H1 (cell line): ENCODE measurements at regions of chr2 and their contacts with region 1.

Region 1: GRCh38 chr2:165874445-165875039 is 79.0 kb downstream of the TTC21B start:
- DNase-seq: no peak
- H3K4me3 ChIP-seq: no peak overlapping the region
- H3K27ac ChIP-seq: no peak overlapping the region
- H3K4me1 ChIP-seq: no peaks in the 10 kb centered on the region
- H3K27me3 ChIP-seq: peaks cover 0 to 1% (median 0%) of the 10 kb centered on the region in 4 experiments; a peak in 1 of 7 replicates
- CTCF ChIP-seq: peak in 2 of 3 experiments; percentile 53 to 69; a peak in 2 of 4 replicates
- EP300 ChIP-seq: no peak
- POLR2A ChIP-seq: no peak
- RAD21 ChIP-seq: peak; percentile 93 to 94

Region 2: GRCh38 chr2:165401285-165401852 is 473.2 kb before region 1 on chr2:
- CTCF ChIA-PET with region 1: interaction called, 13 read pairs
- POLR2A ChIA-PET with region 1: no interaction called
- DNase-seq: no peak
- H3K4me3 ChIP-seq: no peak overlapping the region
- H3K27ac ChIP-seq: no peak overlapping the region
- H3K4me1 ChIP-seq: peaks cover 0 to 5% (median 4%) of the 10 kb centered on the region in 4 experiments; a peak in 5 of 7 replicates
- H3K27me3 ChIP-seq: no peaks in the 10 kb centered on the region
- CTCF ChIP-seq: peak in 2 of 3 experiments; percentile 60 to 71; a peak in 2 of 4 replicates
- EP300 ChIP-seq: no peak
- POLR2A ChIP-seq: no peak
- RAD21 ChIP-seq: peak; percentile 84 to 88

Region 3: DNA sequence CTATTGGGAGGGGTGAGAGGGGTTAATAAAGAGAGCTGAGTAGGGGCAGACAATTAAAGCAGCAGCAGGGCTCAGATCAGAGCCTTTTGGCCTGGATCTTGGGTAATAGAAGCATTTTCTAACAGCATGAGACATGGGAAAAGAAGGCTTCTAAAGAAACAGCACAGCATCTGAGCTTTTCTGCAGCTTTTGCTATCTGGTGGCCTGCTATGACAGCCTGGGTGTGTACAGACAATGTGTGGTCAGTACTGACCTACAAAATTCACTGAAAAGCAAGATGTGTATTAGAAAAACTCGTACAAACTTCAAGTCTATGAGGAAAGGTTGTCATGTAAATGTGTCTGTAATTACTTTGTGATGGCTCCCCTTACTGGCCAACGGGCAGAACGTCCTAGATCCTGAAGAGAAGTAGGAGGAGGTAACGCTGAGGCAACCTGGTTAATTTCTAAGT is 176.1 kb before region 1 on chr2:
- CTCF ChIA-PET with region 1: interaction called, 10 read pairs
- POLR2A ChIA-PET with region 1: no interaction called
- DNase-seq: peak in 1 of 2 experiments; percentile 69
- H3K4me3 ChIP-seq: no peak overlapping the region; a peak in 1 of 8 replicates
- H3K27ac ChIP-seq: no peak overlapping the region
- H3K4me1 ChIP-seq: peaks cover 0 to 14% (median 5%) of the 10 kb centered on the region in 4 experiments; a peak in 5 of 7 replicates
- H3K27me3 ChIP-seq: no peaks in the 10 kb centered on the region
- CTCF ChIP-seq: peak; percentile 26 to 67 (median 45)
- EP300 ChIP-seq: no peak
- POLR2A ChIP-seq: no peak
- RAD21 ChIP-seq: peak; percentile 65 to 73

Region 4: GRCh38 chr2:165863810-165864261 is 10.7 kb before region 1 on chr2:
- CTCF ChIA-PET with region 1: interaction called, 13 read pairs
- POLR2A ChIA-PET with region 1: no interaction called
- DNase-seq: no peak
- H3K4me3 ChIP-seq: no peak overlapping the region
- H3K27ac ChIP-seq: no peak overlapping the region
- H3K4me1 ChIP-seq: no peaks in the 10 kb centered on the region
- H3K27me3 ChIP-seq: no peaks in the 10 kb centered on the region
- CTCF ChIP-seq: no peak
- EP300 ChIP-seq: no peak
- POLR2A ChIP-seq: no peak
- RAD21 ChIP-seq: no peak

Region 5: GRCh38 chr2:165920748-165921147 is 46.2 kb after region 1 on chr2:
- CTCF ChIA-PET with region 1: no interaction called
- POLR2A ChIA-PET with region 1: no interaction called
- DNase-seq: no peak
- H3K4me3 ChIP-seq: no peak overlapping the region
- H3K27ac ChIP-seq: no peak overlapping the region
- H3K4me1 ChIP-seq: no peaks in the 10 kb centered on the region
- H3K27me3 ChIP-seq: peaks cover 0 to 1% (median 0%) of the 10 kb centered on the region in 4 experiments; a peak in 1 of 7 replicates
- CTCF ChIP-seq: no peak
- EP300 ChIP-seq: no peak
- POLR2A ChIP-seq: no peak
- RAD21 ChIP-seq: no peak